Testis (tissue), 5 donors: ENCODE measurements at regions of chr3 and their contacts with region 1.

Region 1: GRCh38 chr3:4712143-4712542 is 219.0 kb downstream of the ITPR1 start:
- DNase-seq: no peak
- H3K4me3 ChIP-seq: no peak overlapping the region
- H3K27ac ChIP-seq: no peak overlapping the region
- H3K4me1 ChIP-seq: peaks cover 3% of the 10 kb centered on the region
- H3K27me3 ChIP-seq: no peaks in the 10 kb centered on the region
- CTCF ChIP-seq: no peak
- POLR2A ChIP-seq: no peak

Region 2: GRCh38 chr3:3065876-3066275 is 1646.3 kb before region 1 on chr3:
- intact Hi-C with region 1: no loop called
- DNase-seq: no peak
- H3K4me3 ChIP-seq: no peak overlapping the region
- H3K27ac ChIP-seq: no peak overlapping the region
- H3K4me1 ChIP-seq: no peaks in the 10 kb centered on the region
- H3K27me3 ChIP-seq: no peaks in the 10 kb centered on the region
- CTCF ChIP-seq: no peak
- POLR2A ChIP-seq: no peak

Region 3: GRCh38 chr3:5057857-5058324 is 345.7 kb after region 1 on chr3:
- intact Hi-C with region 1: loop called (anchors 5 kb)
- DNase-seq: peak; percentile 87
- H3K4me3 ChIP-seq: no peak overlapping the region
- H3K27ac ChIP-seq: no peak overlapping the region
- H3K4me1 ChIP-seq: no peaks in the 10 kb centered on the region
- H3K27me3 ChIP-seq: no peaks in the 10 kb centered on the region
- CTCF ChIP-seq: peak; percentile 64 to 89 (median 79)
- POLR2A ChIP-seq: no peak